ENCODE measurements at regions of chr14 and their contacts with region 1.

Region 1: DNA sequence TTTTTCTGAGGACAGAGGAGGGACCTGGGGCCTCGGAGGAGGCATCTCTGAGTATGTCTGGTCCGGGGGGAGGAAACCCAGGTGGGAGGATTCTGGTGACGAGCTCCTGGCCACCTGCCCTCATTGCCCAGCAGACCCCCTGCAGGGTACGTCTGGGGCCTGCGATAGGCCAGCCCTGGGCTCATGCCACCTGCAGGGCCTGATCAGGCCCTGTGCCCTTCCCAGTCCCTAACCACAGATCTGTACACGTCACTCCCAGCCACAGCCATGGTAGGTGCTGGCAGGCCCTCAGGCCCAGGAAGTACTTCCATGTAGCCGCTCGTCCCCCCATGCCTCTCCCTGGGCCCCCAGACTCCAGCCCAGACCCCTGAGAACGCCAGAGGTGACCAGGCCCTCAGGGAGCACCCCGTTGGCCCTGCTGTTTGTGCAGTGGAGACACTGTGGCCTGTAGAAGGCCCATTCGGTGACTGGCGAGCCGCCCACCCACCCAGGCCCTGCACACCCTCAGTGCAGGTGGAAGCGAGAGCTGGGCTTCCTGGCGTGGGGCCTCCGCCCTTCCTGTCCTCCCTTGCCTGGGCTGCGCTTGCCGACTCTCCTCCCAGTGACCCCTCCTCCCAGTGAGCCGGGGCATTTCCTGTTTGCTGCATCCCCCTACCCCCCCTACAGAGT is 5.7 kb downstream of the INF2 start:
- DNase-seq: no peak
- H3K4me3 ChIP-seq: no peak overlapping the region
- H3K27ac ChIP-seq: peak overlapping the region in 1 of 2 experiments; percentile 73; a peak in 1 of 4 replicates
- H3K4me1 ChIP-seq: peaks cover 7 to 34% of the 10 kb centered on the region in 2 experiments; a peak in 3 of 4 replicates
- H3K27me3 ChIP-seq: no peaks in the 10 kb centered on the region
- CTCF ChIP-seq: no peak
- EP300 ChIP-seq: no peak
- RAD21 ChIP-seq: no peak

Region 2: DNA sequence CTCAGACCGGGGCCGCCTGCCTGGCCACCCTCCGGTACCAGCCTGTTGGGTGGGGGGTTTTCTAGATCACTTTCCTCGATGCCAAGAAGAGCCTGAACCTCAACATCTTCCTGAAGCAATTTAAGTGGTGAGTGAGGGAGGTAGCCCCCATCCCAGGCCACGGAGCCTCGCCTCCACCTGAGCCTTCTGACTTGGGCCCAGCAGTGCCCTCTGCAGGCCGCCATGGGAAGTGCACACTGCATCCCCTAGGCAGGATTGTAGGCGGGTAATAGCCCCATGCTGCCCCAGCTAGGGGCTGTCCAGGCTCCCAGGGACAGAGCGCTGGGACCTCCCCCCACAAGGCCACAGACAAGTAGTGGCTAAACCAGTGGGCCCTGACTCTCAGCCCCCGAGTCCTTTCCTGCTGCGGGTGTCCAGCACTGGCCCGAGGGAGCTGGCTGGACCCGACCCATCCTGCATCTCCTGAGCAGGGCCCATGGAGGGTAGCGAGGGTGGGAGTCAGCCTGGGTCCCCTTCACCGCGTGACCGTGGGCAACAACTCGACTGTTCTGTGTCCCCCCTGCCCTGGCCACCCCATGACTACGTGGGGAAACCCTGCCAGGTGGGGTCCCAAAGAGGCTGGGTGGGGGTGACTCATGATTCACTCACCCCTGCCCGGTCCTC is 13.6 kb after region 1 on chr14:
- CTCF ChIA-PET with region 1: interaction called, 33 read pairs
- POLR2A ChIA-PET with region 1: interaction called, 3 read pairs
- DNase-seq: peak; percentile 97
- H3K4me3 ChIP-seq: no peak overlapping the region; a peak in 1 of 4 replicates
- H3K27ac ChIP-seq: no peak overlapping the region
- H3K4me1 ChIP-seq: no peaks in the 10 kb centered on the region; a peak in 1 of 4 replicates
- H3K27me3 ChIP-seq: no peaks in the 10 kb centered on the region
- CTCF ChIP-seq: peak; percentile 96
- EP300 ChIP-seq: no peak
- RAD21 ChIP-seq: peak; percentile 79